ENCODE measurements at regions of chr15 and their contacts with region 1.

Region 1: GRCh38 chr15:48352474-48353072 is 21.3 kb downstream of the DUT start:
- DNase-seq: peak; percentile 49
- CTCF ChIP-seq: peak; percentile 86

Region 2: DNA sequence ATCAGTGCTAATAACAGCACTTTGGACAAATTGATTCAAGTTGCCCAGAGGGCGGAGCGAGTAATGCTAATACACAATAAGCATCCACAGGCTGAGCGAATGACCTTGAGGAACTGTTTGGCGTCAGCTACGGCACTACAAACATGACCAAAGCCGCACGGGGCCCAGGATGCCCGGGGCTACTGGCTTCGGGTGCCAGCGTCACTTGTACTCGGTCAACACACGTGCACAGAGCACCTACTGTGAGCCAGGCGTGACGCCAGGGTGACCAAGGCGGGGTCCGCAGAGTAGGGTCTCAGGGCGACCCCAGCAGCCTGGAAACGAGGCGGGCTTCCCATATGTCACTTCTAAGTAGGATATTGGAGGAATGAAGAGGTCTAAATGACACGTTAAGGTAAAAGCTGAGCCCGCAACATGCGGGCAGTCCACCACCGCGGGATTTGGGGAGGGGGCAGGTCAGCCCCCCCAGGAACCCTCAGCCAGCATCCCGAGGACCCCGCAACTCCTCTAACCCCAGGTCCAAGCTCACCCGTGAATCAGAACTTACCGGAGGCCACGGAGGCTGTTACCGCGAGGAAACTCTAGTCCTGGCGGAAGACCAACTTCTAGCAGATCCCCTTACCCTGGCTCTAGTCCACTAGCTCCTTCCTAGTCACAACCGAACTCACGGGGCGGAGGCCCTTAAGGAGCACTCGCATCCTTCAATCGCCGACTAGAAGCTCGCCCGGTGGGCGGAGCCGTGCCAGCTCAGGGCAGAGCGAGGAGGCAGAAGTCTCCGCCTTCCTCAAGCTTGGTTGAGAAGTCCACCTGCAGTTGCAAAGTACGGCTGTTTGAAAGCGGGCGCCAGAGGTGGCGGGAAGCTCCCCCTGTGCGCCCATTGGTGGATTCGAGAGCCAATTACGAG is 458.1 kb after region 1 on chr15 and contains the start of gene CEP152:
- in situ Hi-C with region 1: loop called (anchors 25 kb)
- DNase-seq: peak; percentile 89
- CTCF ChIP-seq: no peak

Region 3: DNA sequence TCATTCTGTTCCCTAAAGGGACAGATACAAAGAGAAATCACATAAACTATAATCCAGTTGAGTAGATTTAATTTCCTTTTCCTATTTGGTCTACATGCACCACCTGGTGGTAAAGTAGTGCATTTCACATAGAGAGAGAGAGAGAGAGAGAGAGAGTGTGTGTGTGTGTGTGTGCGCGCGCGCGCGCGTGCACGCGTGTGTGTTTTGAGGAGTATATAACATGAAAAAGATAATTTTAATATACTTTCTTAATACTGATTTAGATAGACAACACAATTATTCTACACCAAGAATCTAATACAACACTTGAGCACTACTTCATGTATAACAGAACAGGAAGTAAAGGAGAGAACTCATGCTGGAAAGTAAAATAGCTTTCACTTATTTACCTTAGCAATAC is 1069.4 kb after region 1 on chr15:
- in situ Hi-C with region 1: loop called (anchors 25 kb)
- DNase-seq: peak; percentile 14
- CTCF ChIP-seq: peak; percentile 64

Measured in GM13977 (cell line).